GM12878 (cell line): ENCODE measurements at regions of chrX and their contacts with region 1.

Region 1: DNA sequence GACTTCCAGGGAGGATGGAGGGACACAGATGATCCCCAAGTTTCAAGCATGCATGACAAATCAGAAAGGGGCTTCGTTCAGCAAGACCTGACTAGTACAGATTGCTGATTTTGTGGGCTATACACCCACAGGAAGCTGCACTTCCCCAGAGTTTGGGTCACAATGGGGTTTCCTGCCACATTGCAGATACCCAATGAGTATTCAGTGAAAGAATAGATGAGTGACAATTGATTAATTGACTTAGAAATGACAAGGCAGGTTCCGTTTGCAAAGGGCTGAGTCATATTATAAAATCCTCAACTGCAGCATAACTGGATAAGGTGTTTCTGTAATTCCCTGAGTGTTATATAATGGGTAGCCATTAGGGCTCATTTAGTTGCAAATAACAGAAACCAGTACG is 146.6 kb upstream of the TBL1X start:
- DNase-seq: no peak
- ATAC-seq: peak; percentile 73
- H3K4me3 ChIP-seq: no peak overlapping the region
- H3K27ac ChIP-seq: no peak overlapping the region
- H3K4me1 ChIP-seq: no peaks in the 10 kb centered on the region
- H3K27me3 ChIP-seq: no peaks in the 10 kb centered on the region
- CTCF ChIP-seq: no peak
- EP300 ChIP-seq: no peak
- POLR2A ChIP-seq: no peak
- RAD21 ChIP-seq: no peak

Region 2: DNA sequence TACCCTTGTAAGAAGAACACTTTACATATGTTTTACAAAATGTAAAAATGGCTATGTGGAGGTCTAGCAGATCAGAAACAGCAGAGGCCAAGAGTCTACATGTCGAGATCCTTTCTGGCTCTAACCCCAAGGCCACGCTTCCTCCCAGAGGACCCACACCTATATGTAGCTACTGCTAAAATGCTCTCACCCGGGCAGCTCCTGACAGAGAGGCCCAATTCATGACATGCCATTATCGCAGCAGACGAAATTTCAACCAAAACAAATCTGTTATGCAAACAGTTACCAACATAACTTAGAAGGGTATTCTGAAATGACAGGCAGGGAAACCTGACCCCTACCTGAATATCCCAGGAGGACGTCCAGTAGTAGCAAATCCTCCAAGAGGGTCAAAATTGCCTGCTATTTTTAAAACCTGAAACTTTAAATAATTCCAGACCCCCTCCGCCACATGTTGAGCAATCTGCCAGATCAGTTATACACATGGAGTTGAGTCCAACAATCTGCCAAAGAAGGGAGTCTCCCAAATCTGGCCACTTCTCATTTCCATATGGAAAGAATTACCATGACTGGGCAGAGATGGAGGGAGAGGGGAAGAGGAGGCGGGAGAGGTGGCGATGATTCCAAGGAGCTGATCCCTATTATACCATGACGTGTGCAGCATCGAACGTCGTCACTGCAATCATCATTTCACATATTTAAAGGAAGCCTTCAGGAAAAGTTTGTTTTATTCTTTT is 46.3 kb before region 1 on chrX:
- CTCF ChIA-PET with region 1: no interaction called
- POLR2A ChIA-PET with region 1: no interaction called
- RAD21 ChIA-PET with region 1: no interaction called
- SMC1A ChIA-PET with region 1: no interaction called
- in situ Hi-C with region 1: no loop called
- intact Hi-C with region 1: no loop called
- DNase-seq: no peak
- ATAC-seq: no peak
- H3K4me3 ChIP-seq: no peak overlapping the region
- H3K27ac ChIP-seq: no peak overlapping the region
- H3K4me1 ChIP-seq: no peaks in the 10 kb centered on the region
- H3K27me3 ChIP-seq: no peaks in the 10 kb centered on the region
- CTCF ChIP-seq: no peak
- EP300 ChIP-seq: no peak
- POLR2A ChIP-seq: no peak
- RAD21 ChIP-seq: no peak

Region 3: GRCh38 chrX:9341291-9342201 is 23.3 kb after region 1 on chrX:
- CTCF ChIA-PET with region 1: no interaction called
- POLR2A ChIA-PET with region 1: no interaction called
- RAD21 ChIA-PET with region 1: no interaction called
- SMC1A ChIA-PET with region 1: no interaction called
- in situ Hi-C with region 1: no loop called
- intact Hi-C with region 1: loop called (anchors 2 kb)
- DNase-seq: peak; percentile 53
- ATAC-seq: peak; percentile 92
- H3K4me3 ChIP-seq: no peak overlapping the region
- H3K27ac ChIP-seq: peak overlapping the region; percentile 39
- H3K4me1 ChIP-seq: peaks cover 4% of the 10 kb centered on the region; the same call in 1 of the 2 replicates
- H3K27me3 ChIP-seq: no peaks in the 10 kb centered on the region
- CTCF ChIP-seq: no peak
- EP300 ChIP-seq: peak; percentile 79 to 89
- POLR2A ChIP-seq: no peak
- RAD21 ChIP-seq: no peak

Region 4: GRCh38 chrX:9352694-9353411 is 34.6 kb after region 1 on chrX:
- CTCF ChIA-PET with region 1: interaction called, 4 read pairs
- POLR2A ChIA-PET with region 1: no interaction called
- RAD21 ChIA-PET with region 1: no interaction called
- SMC1A ChIA-PET with region 1: no interaction called
- in situ Hi-C with region 1: no loop called
- intact Hi-C with region 1: loop called (anchors 1 kb)
- DNase-seq: peak; percentile 38
- ATAC-seq: peak; percentile 87
- H3K4me3 ChIP-seq: peak overlapping the region; percentile 15; the same call in 1 of the 2 replicates
- H3K27ac ChIP-seq: peak overlapping the region; percentile 79
- H3K4me1 ChIP-seq: peaks cover 5% of the 10 kb centered on the region; the same call in 1 of the 2 replicates
- H3K27me3 ChIP-seq: no peaks in the 10 kb centered on the region
- CTCF ChIP-seq: no peak
- EP300 ChIP-seq: peak in 1 of 2 experiments; percentile 50; a peak in 2 of 4 replicates
- POLR2A ChIP-seq: 0 out of 2 replicates have a peak, but pooled peaks have one; percentile 15
- RAD21 ChIP-seq: no peak

Region 5: DNA sequence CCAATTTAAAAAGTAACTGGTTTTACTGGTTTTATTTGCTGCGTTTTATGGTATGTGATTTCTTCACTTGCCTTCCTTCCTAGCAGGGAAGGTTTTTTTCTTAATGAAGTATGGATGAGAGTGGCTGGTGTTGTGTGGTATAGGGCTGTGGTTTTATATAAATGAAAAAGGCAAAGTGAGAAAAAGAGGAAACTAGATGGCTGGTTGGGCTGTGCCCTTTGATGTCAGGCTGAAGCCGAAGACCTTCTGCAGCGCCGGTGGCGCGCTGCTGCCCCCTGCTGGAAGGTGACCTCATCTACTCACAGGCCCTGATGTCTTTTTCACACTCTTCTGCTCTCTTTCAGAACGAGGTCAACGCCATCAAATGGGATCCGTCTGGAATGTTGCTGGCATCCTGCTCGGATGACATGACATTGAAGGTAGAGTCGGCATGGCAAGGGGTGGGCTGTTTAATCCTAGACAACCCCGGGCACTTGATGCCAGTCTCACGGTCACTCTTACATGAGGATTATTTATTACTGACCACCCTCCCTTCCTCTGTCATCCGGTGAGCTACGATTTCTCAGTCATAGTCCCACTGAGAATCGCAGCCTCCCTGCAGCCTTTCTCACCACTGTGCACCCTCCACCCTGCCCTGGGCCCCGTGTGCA is 390.8 kb after region 1 on chrX:
- CTCF ChIA-PET with region 1: no interaction called
- POLR2A ChIA-PET with region 1: no interaction called
- RAD21 ChIA-PET with region 1: no interaction called
- SMC1A ChIA-PET with region 1: no interaction called
- in situ Hi-C with region 1: no loop called
- intact Hi-C with region 1: no loop called
- DNase-seq: peak; percentile 42
- ATAC-seq: peak; percentile 95
- H3K4me3 ChIP-seq: no peak overlapping the region
- H3K27ac ChIP-seq: no peak overlapping the region
- H3K4me1 ChIP-seq: no peaks in the 10 kb centered on the region
- H3K27me3 ChIP-seq: no peaks in the 10 kb centered on the region
- CTCF ChIP-seq: peak; percentile 81 to 91 (median 83)
- EP300 ChIP-seq: no peak
- POLR2A ChIP-seq: no peak
- RAD21 ChIP-seq: peak; percentile 91